ENCODE measurements at regions of chr18 and their contacts with region 1.

Region 1: DNA sequence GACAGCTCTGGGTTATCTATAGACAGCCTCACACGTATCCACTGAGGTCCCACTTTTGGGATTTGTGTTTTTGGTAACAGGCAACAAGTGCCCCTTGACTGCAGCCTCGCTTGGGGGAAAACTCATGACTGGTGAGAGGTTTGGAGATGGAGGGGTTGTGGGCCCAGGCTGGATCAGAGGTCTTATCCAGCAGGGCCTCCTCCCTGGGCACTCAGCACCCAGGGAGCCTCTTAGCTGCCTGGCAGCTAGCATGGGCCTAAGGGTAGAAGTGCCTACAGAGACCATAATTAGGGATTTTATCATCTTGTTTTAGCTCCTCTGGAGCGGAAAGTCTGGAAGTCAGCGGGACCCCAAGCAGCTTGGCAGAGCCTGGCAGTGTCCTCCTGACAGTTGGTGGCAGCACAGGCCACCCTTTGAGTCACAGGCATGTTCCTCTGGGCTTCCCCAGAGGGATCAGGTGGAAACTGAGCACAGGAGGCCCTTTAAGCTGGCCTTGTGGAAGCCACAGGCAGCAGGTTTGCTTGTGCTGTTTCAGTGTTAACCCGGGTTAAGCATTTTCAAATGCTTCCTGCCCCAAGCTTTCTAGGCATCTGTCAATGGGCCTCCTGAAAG is 143.1 kb downstream of the KCTD1 start:
- DNase-seq: peak; percentile 62
- H3K4me3 ChIP-seq: no peak overlapping the region
- H3K27ac ChIP-seq: no peak overlapping the region
- H3K4me1 ChIP-seq: peaks cover 0 to 2% of the 10 kb centered on the region in 2 experiments; a peak in 1 of 4 replicates
- H3K27me3 ChIP-seq: no peaks in the 10 kb centered on the region
- CTCF ChIP-seq: peak; percentile 70
- EP300 ChIP-seq: no peak
- RAD21 ChIP-seq: peak; percentile 83

Region 2: DNA sequence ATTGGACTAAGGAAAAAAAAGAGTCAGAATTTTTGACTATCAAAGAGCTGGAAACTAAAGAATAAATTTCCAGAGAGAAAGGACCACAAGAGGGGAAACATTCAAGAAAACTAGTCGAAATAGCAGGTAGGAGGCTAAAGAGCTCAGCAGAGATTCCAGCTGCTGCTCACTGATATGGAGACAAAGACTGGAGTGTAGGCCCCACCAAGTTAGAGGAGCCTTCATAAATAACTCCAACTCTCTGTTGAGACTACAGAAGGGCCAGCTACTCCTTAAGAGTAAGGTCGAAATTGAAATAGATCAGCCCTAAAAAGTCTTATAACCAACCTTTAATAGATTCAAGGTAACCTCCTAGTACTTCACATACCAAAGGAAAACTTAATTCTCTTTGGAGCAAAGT is 345.9 kb before region 1 on chr18:
- CTCF ChIA-PET with region 1: no interaction called
- POLR2A ChIA-PET with region 1: no interaction called
- DNase-seq: no peak
- H3K4me3 ChIP-seq: no peak overlapping the region
- H3K27ac ChIP-seq: no peak overlapping the region; a peak in 1 of 4 replicates
- H3K4me1 ChIP-seq: peaks cover 0 to 15% of the 10 kb centered on the region in 2 experiments; a peak in 2 of 4 replicates
- H3K27me3 ChIP-seq: no peaks in the 10 kb centered on the region
- CTCF ChIP-seq: no peak
- EP300 ChIP-seq: no peak
- RAD21 ChIP-seq: no peak

Region 3: GRCh38 chr18:26370037-26370436 is 35.3 kb before region 1 on chr18:
- CTCF ChIA-PET with region 1: no interaction called
- POLR2A ChIA-PET with region 1: no interaction called
- DNase-seq: no peak
- H3K4me3 ChIP-seq: no peak overlapping the region
- H3K27ac ChIP-seq: no peak overlapping the region
- H3K4me1 ChIP-seq: no peaks in the 10 kb centered on the region; a peak in 1 of 4 replicates
- H3K27me3 ChIP-seq: no peaks in the 10 kb centered on the region
- CTCF ChIP-seq: no peak
- EP300 ChIP-seq: no peak
- RAD21 ChIP-seq: no peak

Region 4: DNA sequence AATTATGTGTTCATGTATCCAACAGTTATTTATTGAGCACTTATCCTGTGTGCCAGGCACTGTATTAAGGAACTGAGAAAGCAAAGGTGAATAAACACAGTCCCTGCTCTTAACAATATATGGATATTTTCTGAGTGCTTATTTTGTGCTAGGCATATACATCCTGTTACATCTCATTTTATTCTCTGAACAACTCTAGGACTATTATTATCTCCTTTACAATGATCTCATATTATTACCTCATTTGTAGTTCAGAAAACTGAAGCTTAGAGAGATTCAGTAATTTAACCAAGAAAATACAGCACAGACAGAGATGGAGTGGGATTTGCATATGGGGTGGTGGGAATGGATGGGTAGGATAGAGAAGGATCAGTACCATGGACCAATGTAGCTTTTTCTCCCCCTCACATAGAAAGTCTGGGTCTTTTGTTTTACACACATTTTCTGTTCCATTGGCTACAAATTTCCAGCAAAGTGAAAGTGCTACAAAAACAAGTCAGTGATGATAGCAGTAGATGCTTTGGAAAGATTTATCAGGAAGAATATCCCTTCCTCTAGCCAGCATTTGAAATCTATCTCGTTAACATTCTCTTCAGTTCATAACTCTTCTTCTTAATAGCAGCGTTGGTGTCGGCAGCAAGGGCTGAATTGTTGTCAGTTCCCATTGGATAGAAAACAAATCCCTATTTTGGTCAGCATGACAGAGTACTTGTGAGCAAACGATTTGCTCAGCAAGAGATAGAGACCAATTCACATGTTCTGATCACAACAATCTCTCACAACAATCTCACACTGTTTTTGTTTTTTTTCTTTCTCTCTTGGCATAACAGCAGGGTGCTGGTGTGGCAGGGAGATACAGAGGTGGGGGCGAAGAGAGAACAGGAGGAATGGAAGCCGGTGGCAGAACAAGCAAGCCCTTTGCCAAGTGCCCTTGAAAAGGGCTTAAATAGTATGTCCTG is 245.3 kb after region 1 on chr18:
- CTCF ChIA-PET with region 1: interaction called, 23 read pairs
- POLR2A ChIA-PET with region 1: no interaction called
- DNase-seq: no peak
- H3K4me3 ChIP-seq: no peak overlapping the region
- H3K27ac ChIP-seq: peak overlapping the region in 1 of 2 experiments; percentile 89; a peak in 2 of 4 replicates
- H3K4me1 ChIP-seq: peaks cover 0 to 28% of the 10 kb centered on the region in 2 experiments; a peak in 2 of 4 replicates
- H3K27me3 ChIP-seq: no peaks in the 10 kb centered on the region
- CTCF ChIP-seq: no peak
- EP300 ChIP-seq: no peak
- RAD21 ChIP-seq: no peak